Activated naive CD4-positive, alpha-beta T cell treated with anti-CD3 and anti-CD28 coated beads, Interleukin-2, amount 10 ng/mL, durations not matched to agents 7 days and 5 days (primary cell): ENCODE measurements at regions of chr1 and their contacts with region 1.

Region 1: GRCh38 chr1:111615870-111616715 is 3.5 kb upstream of the RAP1A start:
- DNase-seq: peak; percentile 64
- H3K4me3 Mint-ChIP-seq: peak overlapping the region; percentile 16
- H3K27ac Mint-ChIP-seq: peak overlapping the region; percentile 90
- H3K4me1 Mint-ChIP-seq: peaks cover 48% of the 10 kb centered on the region
- H3K27me3 Mint-ChIP-seq: no peaks in the 10 kb centered on the region

Region 2: GRCh38 chr1:111603979-111604378 is 12.1 kb before region 1 on chr1:
- CTCF ChIA-PET with region 1: interaction called, 14 read pairs
- DNase-seq: peak; percentile 88
- H3K4me3 Mint-ChIP-seq: peak overlapping the region; percentile 12
- H3K27ac Mint-ChIP-seq: peak overlapping the region; percentile 91
- H3K4me1 Mint-ChIP-seq: peaks cover 75% of the 10 kb centered on the region
- H3K27me3 Mint-ChIP-seq: no peaks in the 10 kb centered on the region

Region 3: GRCh38 chr1:111644506-111644905 is 28.4 kb after region 1 on chr1:
- CTCF ChIA-PET with region 1: no interaction called
- DNase-seq: no peak
- H3K4me3 Mint-ChIP-seq: no peak overlapping the region
- H3K27ac Mint-ChIP-seq: no peak overlapping the region
- H3K4me1 Mint-ChIP-seq: peaks cover 54% of the 10 kb centered on the region
- H3K27me3 Mint-ChIP-seq: no peaks in the 10 kb centered on the region

Region 4: GRCh38 chr1:111739194-111739924 is 123.3 kb after region 1 on chr1 and contains the start of gene INKA2:
- CTCF ChIA-PET with region 1: no interaction called
- DNase-seq: peak; percentile 88
- H3K4me3 Mint-ChIP-seq: peak within 1 kb of the TSS; percentile 77
- H3K27ac Mint-ChIP-seq: peak within 1 kb of the TSS; percentile 79
- H3K4me1 Mint-ChIP-seq: peaks cover 23% of the 10 kb centered on the region
- H3K27me3 Mint-ChIP-seq: no peaks in the 10 kb centered on the region